Right ventricle myocardium inferior (tissue), 1 donor: ENCODE measurements at regions of chr4 and their contacts with region 1.

Region 1: GRCh38 chr4:125368671-125369081 is 53.9 kb downstream of the FAT4 start:
- DNase-seq: no peak
- ATAC-seq: no peak

Region 2: DNA sequence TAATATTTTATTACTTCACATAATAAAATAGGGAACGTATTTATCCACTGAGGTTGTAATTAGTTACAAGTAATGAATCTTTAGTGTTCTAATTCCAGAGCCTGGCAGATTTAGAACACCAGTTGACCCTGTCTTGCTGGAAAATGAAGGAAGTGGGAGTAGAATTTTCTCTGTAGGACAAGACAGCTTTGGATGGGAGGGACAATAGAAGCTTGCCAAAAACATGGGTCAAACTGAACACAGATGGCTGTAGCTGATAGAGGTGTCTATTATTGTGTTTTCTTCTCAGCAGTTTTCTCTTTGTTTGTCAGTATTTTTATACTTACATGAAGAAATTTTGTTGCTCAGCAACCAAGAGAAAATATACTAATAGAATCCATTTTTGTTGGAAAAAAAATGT is 33.8 kb before region 1 on chr4:
- intact Hi-C with region 1: loop called (anchors 5 kb)
- DNase-seq: no peak
- ATAC-seq: no peak